Activated T-helper 1 cell treated with anti-CD3 and anti-CD28 coated beads, Interleukin-12 subunit alpha, Interleukin-12 subunit beta, Interleukin-2, Interleukin-4 antibody, amounts not matched to agents 30 ng/mL and 10 ng/mL and 1 ng/mL, durations not matched to agents 14 hours and 24 hours and 36 hours (primary cell): ENCODE measurements at regions of chr11 and their contacts with region 1.

Region 1: GRCh38 chr11:82867495-82868082 is 32.6 kb downstream of the PRCP start:
- DNase-seq: peak; percentile 54
- H3K4me3 Mint-ChIP-seq: no peak overlapping the region
- H3K27ac Mint-ChIP-seq: no peak overlapping the region
- H3K4me1 Mint-ChIP-seq: peaks cover 14% of the 10 kb centered on the region
- H3K27me3 Mint-ChIP-seq: peaks cover 6% of the 10 kb centered on the region

Region 2: DNA sequence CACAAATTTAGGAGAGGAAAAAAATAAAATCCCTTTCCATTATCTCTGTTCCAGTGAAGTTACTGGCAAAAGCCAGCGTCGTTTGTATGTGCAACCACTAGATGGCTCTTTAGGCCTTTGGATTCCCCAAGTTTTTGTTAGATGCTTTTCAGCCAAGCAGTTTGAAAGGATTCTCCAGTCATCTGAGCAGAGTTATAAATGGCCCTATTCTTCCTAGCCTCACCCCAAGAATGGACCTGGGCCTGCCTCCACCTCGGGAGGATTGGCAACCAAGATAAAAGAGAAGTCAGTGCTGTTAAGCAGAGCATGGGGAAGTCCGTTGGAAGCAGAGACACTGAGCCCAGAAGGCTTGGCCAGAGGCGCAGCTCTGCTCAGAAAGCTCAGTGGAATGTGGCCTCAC is 149.3 kb before region 1 on chr11:
- intact Hi-C with region 1: loop called (anchors 1 kb)
- DNase-seq: no peak
- H3K4me3 Mint-ChIP-seq: no peak overlapping the region
- H3K27ac Mint-ChIP-seq: no peak overlapping the region
- H3K4me1 Mint-ChIP-seq: no peaks in the 10 kb centered on the region
- H3K27me3 Mint-ChIP-seq: peaks cover 5% of the 10 kb centered on the region

Region 3: GRCh38 chr11:82831364-82831763 is 36.2 kb before region 1 on chr11:
- intact Hi-C with region 1: no loop called
- DNase-seq: no peak
- H3K4me3 Mint-ChIP-seq: no peak overlapping the region
- H3K27ac Mint-ChIP-seq: no peak overlapping the region
- H3K4me1 Mint-ChIP-seq: no peaks in the 10 kb centered on the region
- H3K27me3 Mint-ChIP-seq: no peaks in the 10 kb centered on the region

Region 4: GRCh38 chr11:82900277-82901164 is 32.9 kb after region 1 on chr11 and contains the start of gene PRCP:
- intact Hi-C with region 1: loop called (anchors 1 kb)
- DNase-seq: peak; percentile 93
- H3K4me3 Mint-ChIP-seq: peak within 1 kb of the TSS; percentile 99
- H3K27ac Mint-ChIP-seq: peak within 1 kb of the TSS; percentile 100
- H3K4me1 Mint-ChIP-seq: peaks cover 70% of the 10 kb centered on the region
- H3K27me3 Mint-ChIP-seq: no peaks in the 10 kb centered on the region
- total RNA-seq, gene PRCP: 22.7 and 24.0 TPM in 2 replicates

Region 5: DNA sequence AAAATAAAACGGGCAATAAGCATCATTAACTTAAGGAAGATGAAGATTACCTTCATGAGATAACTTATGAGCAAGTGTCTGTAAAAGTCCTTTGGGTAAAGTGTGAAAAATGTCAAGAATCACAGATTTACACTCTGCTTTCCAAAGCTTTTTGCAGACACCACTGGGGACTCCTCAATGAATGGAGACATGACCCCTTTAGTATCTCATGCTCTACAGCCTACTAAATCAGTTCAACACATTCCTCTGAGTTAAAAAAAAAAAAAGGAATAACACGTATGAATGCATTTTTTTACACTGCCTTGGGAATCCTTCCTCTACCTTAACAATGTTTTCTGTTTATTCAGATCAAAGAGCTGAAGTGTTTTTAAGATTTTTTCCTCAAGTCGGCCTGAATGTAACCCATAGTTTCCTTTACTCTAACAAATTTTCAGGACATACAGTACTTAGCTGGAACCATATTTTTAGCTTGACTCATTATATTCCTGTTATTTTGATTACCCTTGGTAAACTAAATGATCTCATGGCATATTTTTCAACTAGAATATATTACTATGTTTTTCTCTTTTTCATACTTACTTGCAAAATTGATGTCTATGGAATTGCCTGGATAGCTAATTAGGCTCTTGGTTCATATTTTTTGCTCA is 230.0 kb after region 1 on chr11:
- intact Hi-C with region 1: no loop called
- DNase-seq: no peak
- H3K4me3 Mint-ChIP-seq: no peak overlapping the region
- H3K27ac Mint-ChIP-seq: no peak overlapping the region
- H3K4me1 Mint-ChIP-seq: no peaks in the 10 kb centered on the region
- H3K27me3 Mint-ChIP-seq: peaks cover 6% of the 10 kb centered on the region

Region 6: DNA sequence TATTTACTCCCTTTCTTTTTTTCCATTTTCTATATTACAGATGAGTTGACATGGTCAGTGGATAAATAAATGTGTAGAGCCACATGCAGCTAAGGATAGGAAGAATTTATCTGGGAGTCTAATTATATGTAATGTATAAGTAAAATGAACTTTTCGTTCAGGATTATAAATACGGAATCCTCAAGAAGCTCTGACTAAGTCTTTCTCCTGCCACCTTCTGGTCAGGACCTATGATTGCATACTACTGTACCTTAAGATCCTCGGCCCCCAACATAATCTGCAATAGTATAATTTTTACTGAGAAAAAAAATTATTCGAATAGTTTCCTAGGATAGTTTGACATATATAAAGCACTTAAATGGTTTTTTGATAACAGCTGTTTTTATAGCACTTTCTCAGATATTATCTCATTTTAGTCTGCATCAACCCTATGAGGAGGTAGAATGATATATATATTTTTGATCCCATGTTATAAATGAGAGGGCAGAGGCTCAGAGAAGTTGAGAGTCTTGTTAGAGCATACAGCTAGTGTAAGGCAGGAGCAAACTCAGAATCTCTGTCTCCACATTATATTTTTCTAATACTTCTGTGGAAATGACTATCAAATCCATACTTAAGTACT is 382.5 kb after region 1 on chr11:
- intact Hi-C with region 1: loop called (anchors 1 kb)
- DNase-seq: no peak
- H3K4me3 Mint-ChIP-seq: no peak overlapping the region
- H3K27ac Mint-ChIP-seq: no peak overlapping the region
- H3K4me1 Mint-ChIP-seq: peaks cover 4% of the 10 kb centered on the region
- H3K27me3 Mint-ChIP-seq: peaks cover 5% of the 10 kb centered on the region